Transverse colon (tissue), 4 donors: ENCODE measurements at regions of chr11 and their contacts with region 1.

Region 1: GRCh38 chr11:83836883-83837654 is 550.9 kb upstream of the CCDC90B start:
- DNase-seq: peak; percentile 13
- H3K4me3 ChIP-seq: no peak overlapping the region
- H3K27ac ChIP-seq: no peak overlapping the region
- H3K4me1 ChIP-seq: peaks cover 0 to 4% (median 0%) of the 10 kb centered on the region in 4 donors
- H3K27me3 ChIP-seq: no peaks in the 10 kb centered on the region
- CTCF ChIP-seq: peak in 4 of 5 experiments; percentile 19 to 48 (median 40)
- EP300 ChIP-seq: no peak
- POLR2A ChIP-seq: no peak

Region 2: DNA sequence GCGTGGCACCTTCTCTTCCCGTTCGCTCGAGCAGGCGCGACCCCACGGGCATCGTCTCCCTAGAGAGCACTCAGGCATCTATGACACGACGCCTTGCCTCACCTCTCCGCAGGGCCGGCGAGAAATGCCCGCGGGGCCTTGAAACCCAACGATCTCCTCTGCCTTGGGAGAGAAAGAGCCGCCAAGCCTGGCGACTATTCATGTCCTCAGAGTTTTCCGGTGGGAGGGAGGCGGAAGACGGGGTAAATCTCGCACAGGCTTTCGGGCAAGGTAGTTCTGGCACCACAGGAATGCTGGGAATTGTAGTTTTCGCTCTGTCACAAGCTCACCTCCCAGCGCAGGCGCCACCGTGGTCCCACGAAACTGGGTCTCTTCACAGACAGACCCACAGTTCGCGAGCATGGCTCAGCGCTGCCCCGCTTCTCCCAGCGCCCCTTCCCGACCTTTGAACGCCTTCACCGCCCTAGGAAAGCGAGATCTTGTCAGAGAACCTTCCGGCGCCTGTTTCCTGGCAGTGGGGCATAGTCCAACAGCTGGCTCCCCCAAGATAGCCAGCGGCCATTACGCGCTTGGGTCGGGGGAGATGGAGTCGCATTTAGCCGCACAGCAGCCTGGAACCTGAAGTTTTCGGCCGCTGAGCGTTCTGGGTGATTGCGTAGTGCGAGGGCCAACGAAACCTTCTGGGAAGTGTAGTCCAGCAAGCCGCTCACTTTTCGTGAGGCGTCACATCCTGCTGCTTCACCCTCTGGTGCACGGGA is 551.1 kb before region 1 on chr11 and contains the start of gene CCDC90B:
- in situ Hi-C with region 1: no loop called
- intact Hi-C with region 1: no loop called
- DNase-seq: peak; percentile 96
- H3K4me3 ChIP-seq: peak within 1 kb of the TSS; percentile 67 to 85 (median 72)
- H3K27ac ChIP-seq: peak within 1 kb of the TSS; percentile 93 to 99 (median 98)
- H3K4me1 ChIP-seq: peaks cover 10 to 37% (median 20%) of the 10 kb centered on the region in 4 donors
- H3K27me3 ChIP-seq: no peaks in the 10 kb centered on the region
- CTCF ChIP-seq: no peak
- EP300 ChIP-seq: no peak
- POLR2A ChIP-seq: peak; percentile 95
- total RNA-seq, gene CCDC90B: 3.4 to 40.6 (median 21.6) TPM

Region 3: GRCh38 chr11:83736689-83737088 is 100.4 kb before region 1 on chr11:
- in situ Hi-C with region 1: no loop called
- intact Hi-C with region 1: no loop called
- DNase-seq: no peak
- H3K4me3 ChIP-seq: no peak overlapping the region
- H3K27ac ChIP-seq: no peak overlapping the region
- H3K4me1 ChIP-seq: no peaks in the 10 kb centered on the region
- H3K27me3 ChIP-seq: no peaks in the 10 kb centered on the region
- CTCF ChIP-seq: no peak
- EP300 ChIP-seq: no peak
- POLR2A ChIP-seq: no peak

Region 4: GRCh38 chr11:83933008-83933407 is 95.9 kb after region 1 on chr11:
- in situ Hi-C with region 1: no loop called
- intact Hi-C with region 1: no loop called
- DNase-seq: no peak
- H3K4me3 ChIP-seq: no peak overlapping the region
- H3K27ac ChIP-seq: no peak overlapping the region
- H3K4me1 ChIP-seq: no peaks in the 10 kb centered on the region
- H3K27me3 ChIP-seq: no peaks in the 10 kb centered on the region
- CTCF ChIP-seq: no peak
- EP300 ChIP-seq: no peak
- POLR2A ChIP-seq: no peak

Region 5: GRCh38 chr11:84524422-84525051 is 687.5 kb after region 1 on chr11:
- in situ Hi-C with region 1: loop called in 1 of 4 experiments (anchors 25 kb)
- intact Hi-C with region 1: no loop called
- DNase-seq: no peak
- H3K4me3 ChIP-seq: no peak overlapping the region
- H3K27ac ChIP-seq: no peak overlapping the region
- H3K4me1 ChIP-seq: no peaks in the 10 kb centered on the region
- H3K27me3 ChIP-seq: no peaks in the 10 kb centered on the region
- CTCF ChIP-seq: peak in 1 of 5 experiments; percentile 16
- EP300 ChIP-seq: no peak
- POLR2A ChIP-seq: no peak

Region 6: DNA sequence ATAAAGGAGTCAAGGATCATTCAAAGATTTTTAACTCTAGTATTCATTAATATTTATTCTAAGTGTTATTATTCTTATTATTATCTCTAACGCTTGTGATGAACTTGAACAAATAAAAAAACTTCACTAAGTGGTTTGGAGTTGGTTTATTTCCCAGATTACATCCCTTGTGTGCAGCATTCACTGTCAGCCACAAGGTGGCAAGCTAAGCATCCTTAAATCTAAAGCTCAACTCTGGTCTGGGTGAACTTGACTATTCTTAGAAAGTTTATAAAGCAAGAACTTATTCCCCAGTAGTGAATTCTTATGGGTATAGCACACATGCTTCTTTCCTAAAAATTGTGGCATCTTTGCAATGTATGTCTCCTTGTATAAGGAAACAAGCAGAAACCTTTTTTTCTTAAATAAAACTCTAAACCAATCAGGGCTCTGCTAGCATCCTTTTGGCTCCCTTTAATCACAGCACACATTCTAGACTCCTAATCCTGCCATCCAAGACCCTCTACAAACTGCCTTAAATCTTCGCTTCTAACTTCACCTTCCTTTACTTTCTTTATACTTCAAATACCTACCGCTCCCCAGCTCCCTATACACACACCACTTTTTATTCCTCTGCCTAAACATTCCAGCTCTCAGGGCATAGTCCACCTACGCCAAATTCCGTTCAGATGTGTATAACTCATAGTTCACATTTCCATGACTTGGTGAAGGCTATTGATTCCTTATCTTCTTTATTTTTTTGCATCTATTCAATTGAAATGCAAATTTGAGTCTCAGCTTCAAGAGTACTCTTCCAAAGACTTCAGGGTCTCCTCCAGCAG is 721.2 kb after region 1 on chr11:
- in situ Hi-C with region 1: loop called in 2 of 4 experiments (anchors 25 kb)
- intact Hi-C with region 1: no loop called
- DNase-seq: peak; percentile 31
- H3K4me3 ChIP-seq: no peak overlapping the region
- H3K27ac ChIP-seq: no peak overlapping the region
- H3K4me1 ChIP-seq: no peaks in the 10 kb centered on the region
- H3K27me3 ChIP-seq: no peaks in the 10 kb centered on the region
- CTCF ChIP-seq: peak; percentile 62 to 82 (median 77)
- EP300 ChIP-seq: no peak
- POLR2A ChIP-seq: no peak